Activated T-helper 2 cell treated with anti-CD3 and anti-CD28 coated beads, Interferon-gamma antibody, Interleukin-2, Interleukin-4, amounts not matched to agents 10 μg/mL and 5 μg/mL and 100 μg/mL, durations not matched to agents 14 hours and 24 hours and 36 hours (primary cell): ENCODE measurements at regions of chr16 and their contacts with region 1.

Region 1: DNA sequence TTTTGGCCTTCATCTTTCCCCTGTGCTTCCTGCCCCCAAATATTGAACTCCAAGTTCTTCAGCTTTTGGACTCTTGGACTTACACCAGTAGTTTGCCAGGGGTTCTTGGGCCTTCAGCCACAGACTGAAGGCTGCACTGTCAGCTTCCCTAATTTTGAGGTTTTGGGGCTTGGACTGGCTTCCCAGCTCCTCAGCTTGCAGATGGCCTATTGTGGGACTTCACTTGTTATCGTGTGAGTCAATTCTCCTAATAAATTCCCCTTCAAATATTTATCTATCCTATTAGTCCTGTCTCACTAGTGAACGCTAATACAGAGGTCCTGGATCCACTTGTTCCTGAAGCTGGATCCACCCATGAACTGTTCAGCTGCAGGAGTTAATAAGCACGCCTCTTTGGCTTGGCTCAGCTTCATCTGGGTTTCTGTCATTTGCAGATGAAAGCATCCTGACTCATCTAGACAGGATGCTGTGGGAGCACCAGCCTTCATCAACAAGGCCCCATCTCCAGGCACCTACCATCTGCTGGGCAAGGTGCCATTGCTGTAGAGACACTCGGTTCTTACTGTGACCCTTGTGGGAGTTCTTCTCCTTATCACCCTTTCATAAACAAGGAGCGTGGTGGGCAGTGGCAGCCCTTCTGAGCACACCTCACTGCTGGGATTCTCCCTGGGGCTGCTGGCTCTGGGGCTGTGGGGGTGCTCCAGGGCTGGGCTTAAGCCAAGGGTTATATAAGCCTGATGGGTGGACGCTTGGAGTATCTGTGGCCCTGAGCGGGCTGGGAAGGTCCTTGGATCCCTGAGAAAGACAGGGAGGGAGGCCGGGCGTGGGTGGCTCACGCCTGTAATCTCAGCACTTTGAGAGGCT is 23.1 kb downstream of the LAT start:
- DNase-seq: peak; percentile 63
- H3K4me3 Mint-ChIP-seq: peak overlapping the region; percentile 44
- H3K27ac Mint-ChIP-seq: peak overlapping the region; percentile 92
- H3K4me1 Mint-ChIP-seq: peaks cover 52% of the 10 kb centered on the region
- H3K27me3 Mint-ChIP-seq: no peaks in the 10 kb centered on the region

Region 2: GRCh38 chr16:28950648-28951409 is 57.1 kb before region 1 on chr16 and contains the start of gene NFATC2IP:
- intact Hi-C with region 1: loop called (anchors 2 kb)
- DNase-seq: peak; percentile 100
- H3K4me3 Mint-ChIP-seq: peak within 1 kb of the TSS; percentile 92
- H3K27ac Mint-ChIP-seq: peak within 1 kb of the TSS; percentile 91
- H3K4me1 Mint-ChIP-seq: peaks cover 18% of the 10 kb centered on the region
- H3K27me3 Mint-ChIP-seq: no peaks in the 10 kb centered on the region
- total RNA-seq, gene NFATC2IP: 98.3 and 106 TPM in 2 replicates

Region 3: GRCh38 chr16:28964072-28964471 is 43.9 kb before region 1 on chr16:
- intact Hi-C with region 1: no loop called
- DNase-seq: no peak
- H3K4me3 Mint-ChIP-seq: no peak overlapping the region
- H3K27ac Mint-ChIP-seq: no peak overlapping the region
- H3K4me1 Mint-ChIP-seq: no peaks in the 10 kb centered on the region
- H3K27me3 Mint-ChIP-seq: no peaks in the 10 kb centered on the region

Region 4: GRCh38 chr16:28974437-28975157 is 33.4 kb before region 1 on chr16 and contains the start of gene SPNS1:
- intact Hi-C with region 1: loop called (anchors 5 kb)
- DNase-seq: peak; percentile 92
- H3K4me3 Mint-ChIP-seq: peak within 1 kb of the TSS; percentile 97
- H3K27ac Mint-ChIP-seq: peak within 1 kb of the TSS; percentile 95
- H3K4me1 Mint-ChIP-seq: peaks cover 18% of the 10 kb centered on the region
- H3K27me3 Mint-ChIP-seq: no peaks in the 10 kb centered on the region
- total RNA-seq, gene SPNS1: 22.0 and 25.8 TPM in 2 replicates

Region 5: GRCh38 chr16:28990375-28991040 is 17.5 kb before region 1 on chr16:
- intact Hi-C with region 1: loop called (anchors 2 kb)
- DNase-seq: peak; percentile 41
- H3K4me3 Mint-ChIP-seq: peak overlapping the region; percentile 74
- H3K27ac Mint-ChIP-seq: peak overlapping the region; percentile 92
- H3K4me1 Mint-ChIP-seq: peaks cover 38% of the 10 kb centered on the region
- H3K27me3 Mint-ChIP-seq: no peaks in the 10 kb centered on the region

Region 6: DNA sequence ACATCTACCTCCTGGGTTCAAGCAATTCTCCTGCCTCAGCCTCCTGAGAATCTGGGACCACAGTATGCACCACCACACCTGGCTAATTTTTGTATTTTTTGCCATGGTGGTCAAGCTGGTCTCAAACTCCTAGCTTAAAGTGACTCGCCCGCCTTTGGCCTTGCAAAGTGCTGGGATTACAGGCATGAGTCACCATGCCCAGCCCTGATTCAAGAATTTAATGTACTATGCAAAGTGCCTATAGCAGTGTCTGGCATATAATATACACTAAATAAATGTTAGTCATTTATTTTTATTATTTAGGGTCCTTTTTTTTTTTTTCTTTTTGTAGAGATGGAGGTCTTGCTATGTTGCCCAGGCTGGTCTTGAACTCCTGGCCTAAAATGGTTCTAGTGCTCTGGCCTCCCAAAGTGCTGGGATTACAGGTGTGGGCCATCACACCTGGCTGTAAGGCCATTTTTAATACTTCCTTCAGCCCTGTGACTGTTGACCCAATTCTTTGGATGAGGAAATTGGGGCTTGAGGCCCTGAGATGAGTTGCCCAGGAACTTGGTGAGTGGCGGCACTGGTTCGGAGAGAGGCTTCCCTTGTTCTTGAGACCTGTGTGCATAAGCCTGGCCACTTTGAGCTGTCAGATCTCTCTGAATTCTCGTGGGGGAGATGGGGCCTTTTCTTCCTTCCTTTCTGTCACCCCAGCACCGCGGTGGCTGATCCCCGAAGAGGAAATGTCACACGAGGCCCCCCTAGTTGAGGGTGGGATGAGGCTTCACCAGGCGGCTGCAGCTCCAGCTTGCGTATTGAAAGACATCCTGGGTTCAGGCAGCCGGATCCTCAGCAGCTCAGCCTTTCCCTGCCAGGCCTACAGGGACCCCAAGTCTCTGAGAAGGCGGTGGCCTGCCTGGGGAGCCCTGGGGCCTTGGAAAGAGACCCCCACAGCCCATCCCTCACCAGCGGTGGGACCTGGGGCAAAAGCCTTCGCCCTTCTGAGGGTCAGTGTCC is 15.6 kb after region 1 on chr16:
- intact Hi-C with region 1: loop called (anchors 1 kb)
- DNase-seq: no peak
- H3K4me3 Mint-ChIP-seq: no peak overlapping the region
- H3K27ac Mint-ChIP-seq: peak overlapping the region; percentile 82
- H3K4me1 Mint-ChIP-seq: peaks cover 55% of the 10 kb centered on the region
- H3K27me3 Mint-ChIP-seq: no peaks in the 10 kb centered on the region

Region 7: DNA sequence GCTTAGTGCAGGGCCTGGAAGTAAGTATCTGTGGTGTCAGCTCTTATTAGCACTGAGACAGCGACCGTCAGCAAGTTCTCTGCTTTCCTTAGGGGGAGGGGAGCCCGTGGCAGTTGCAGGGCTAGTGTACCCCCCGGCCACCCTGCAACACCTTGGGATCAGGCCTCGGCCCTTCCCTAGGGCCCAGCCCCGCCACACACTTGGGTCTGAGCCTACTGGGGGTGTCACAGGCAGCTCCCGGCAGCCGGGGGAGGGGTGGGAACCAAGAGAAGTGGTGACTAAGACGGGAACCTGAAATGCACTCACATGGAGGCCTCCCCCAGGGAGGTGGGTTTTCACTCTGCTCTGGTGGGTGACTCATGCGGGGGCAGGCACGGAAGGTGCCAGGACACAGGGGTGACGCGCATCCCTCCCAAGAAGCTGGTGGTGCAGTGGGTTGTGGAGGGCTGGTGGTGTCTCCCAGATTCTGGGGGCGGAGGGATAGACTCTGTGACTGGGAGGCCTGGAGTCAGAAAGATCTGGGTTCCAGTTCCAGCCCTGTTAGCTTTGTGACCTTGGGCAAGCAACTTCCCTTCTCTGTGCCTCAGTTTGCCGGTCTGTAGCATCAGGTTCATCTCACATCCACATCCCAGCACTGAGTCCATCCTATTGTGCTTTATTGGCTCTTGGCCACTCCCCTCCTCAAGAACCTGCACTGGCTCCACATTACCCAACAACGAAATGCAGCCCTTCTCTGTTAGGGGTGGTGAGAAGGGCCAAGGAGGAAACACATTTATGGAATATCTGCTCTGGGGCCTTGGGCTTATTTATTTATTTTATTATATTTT is 21.4 kb after region 1 on chr16:
- intact Hi-C with region 1: loop called (anchors 1 kb)
- DNase-seq: peak; percentile 52
- H3K4me3 Mint-ChIP-seq: no peak overlapping the region
- H3K27ac Mint-ChIP-seq: peak overlapping the region; percentile 77
- H3K4me1 Mint-ChIP-seq: peaks cover 36% of the 10 kb centered on the region
- H3K27me3 Mint-ChIP-seq: no peaks in the 10 kb centered on the region

Region 8: GRCh38 chr16:29139261-29139811 is 131.4 kb after region 1 on chr16:
- intact Hi-C with region 1: no loop called
- DNase-seq: no peak
- H3K4me3 Mint-ChIP-seq: no peak overlapping the region
- H3K27ac Mint-ChIP-seq: no peak overlapping the region
- H3K4me1 Mint-ChIP-seq: peaks cover 3% of the 10 kb centered on the region
- H3K27me3 Mint-ChIP-seq: no peaks in the 10 kb centered on the region